ENCODE measurements at regions of chr13 and their contacts with region 1.

Region 1: GRCh38 chr13:41668130-41668757 is 210.9 kb downstream of the RGCC start:
- DNase-seq: peak; percentile 71 to 82 (median 81)
- H3K4me3 ChIP-seq: no peak overlapping the region
- H3K4me3 Mint-ChIP-seq: no peak overlapping the region
- H3K27ac ChIP-seq: no peak overlapping the region
- H3K27ac Mint-ChIP-seq: peak overlapping the region in 1 of 7 donors; percentile 47
- H3K4me1 ChIP-seq: no peaks in the 10 kb centered on the region
- H3K4me1 Mint-ChIP-seq: no peaks in the 10 kb centered on the region
- H3K27me3 ChIP-seq: no peaks in the 10 kb centered on the region
- H3K27me3 Mint-ChIP-seq: no peaks in the 10 kb centered on the region
- CTCF ChIP-seq: peak; percentile 82

Region 2: GRCh38 chr13:40886017-40886416 is 782.2 kb before region 1 on chr13:
- intact Hi-C with region 1: no loop called
- DNase-seq: no peak
- H3K4me3 ChIP-seq: no peak overlapping the region
- H3K4me3 Mint-ChIP-seq: no peak overlapping the region
- H3K27ac ChIP-seq: no peak overlapping the region
- H3K27ac Mint-ChIP-seq: no peak overlapping the region
- H3K4me1 ChIP-seq: no peaks in the 10 kb centered on the region
- H3K4me1 Mint-ChIP-seq: no peaks in the 10 kb centered on the region
- H3K27me3 ChIP-seq: no peaks in the 10 kb centered on the region
- H3K27me3 Mint-ChIP-seq: no peaks in the 10 kb centered on the region
- CTCF ChIP-seq: no peak

Region 3: DNA sequence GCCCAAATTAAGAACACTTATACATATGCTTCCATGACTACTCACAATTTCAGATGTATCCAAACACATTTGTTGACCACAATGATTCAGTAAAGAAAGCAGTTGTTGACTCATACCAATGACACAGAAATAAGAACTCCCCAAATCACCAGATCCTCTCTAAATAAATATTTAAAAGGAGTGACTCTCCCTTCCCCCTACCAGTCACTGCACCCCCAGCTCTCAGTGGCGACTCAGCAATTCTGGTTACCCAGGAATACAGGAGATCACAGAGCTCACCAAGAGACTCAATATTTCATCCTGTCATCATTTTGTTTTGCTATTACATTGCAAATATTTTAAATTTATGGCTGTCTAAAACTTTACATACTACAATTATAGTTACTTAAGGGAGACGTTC is 79.3 kb before region 1 on chr13:
- intact Hi-C with region 1: no loop called
- DNase-seq: peak; percentile 77 to 90 (median 85)
- H3K4me3 ChIP-seq: no peak overlapping the region
- H3K4me3 Mint-ChIP-seq: peak overlapping the region in 1 of 2 donors; percentile 3
- H3K27ac ChIP-seq: peak overlapping the region in 1 of 2 donors; percentile 77
- H3K27ac Mint-ChIP-seq: peak overlapping the region; percentile 66 to 94 (median 89)
- H3K4me1 ChIP-seq: peaks cover 24 to 31% of the 10 kb centered on the region in 2 donors
- H3K4me1 Mint-ChIP-seq: peaks cover 32% of the 10 kb centered on the region
- H3K27me3 ChIP-seq: no peaks in the 10 kb centered on the region
- H3K27me3 Mint-ChIP-seq: no peaks in the 10 kb centered on the region
- CTCF ChIP-seq: no peak

Region 4: GRCh38 chr13:41835871-41836270 is 167.6 kb after region 1 on chr13:
- intact Hi-C with region 1: loop called in 1 of 2 experiments (anchors 10 kb)
- DNase-seq: no peak
- H3K4me3 ChIP-seq: no peak overlapping the region
- H3K4me3 Mint-ChIP-seq: no peak overlapping the region
- H3K27ac ChIP-seq: no peak overlapping the region
- H3K27ac Mint-ChIP-seq: no peak overlapping the region
- H3K4me1 ChIP-seq: peaks cover 6 to 19% of the 10 kb centered on the region in 2 donors
- H3K4me1 Mint-ChIP-seq: peaks cover 20% of the 10 kb centered on the region
- H3K27me3 ChIP-seq: no peaks in the 10 kb centered on the region
- H3K27me3 Mint-ChIP-seq: no peaks in the 10 kb centered on the region
- CTCF ChIP-seq: no peak

Region 5: GRCh38 chr13:42022796-42023493 is 354.7 kb after region 1 on chr13:
- intact Hi-C with region 1: no loop called
- DNase-seq: no peak
- H3K4me3 ChIP-seq: no peak overlapping the region
- H3K4me3 Mint-ChIP-seq: no peak overlapping the region
- H3K27ac ChIP-seq: no peak overlapping the region
- H3K27ac Mint-ChIP-seq: no peak overlapping the region
- H3K4me1 ChIP-seq: no peaks in the 10 kb centered on the region
- H3K4me1 Mint-ChIP-seq: no peaks in the 10 kb centered on the region
- H3K27me3 ChIP-seq: no peaks in the 10 kb centered on the region
- H3K27me3 Mint-ChIP-seq: peaks cover 0 to 3% (median 2%) of the 10 kb centered on the region in 3 donors
- CTCF ChIP-seq: no peak

Region 6: GRCh38 chr13:42039946-42040729 is 371.9 kb after region 1 on chr13:
- intact Hi-C with region 1: loop called in 1 of 2 experiments (anchors 10 kb)
- DNase-seq: peak; percentile 62 to 78 (median 76)
- H3K4me3 ChIP-seq: peak overlapping the region; percentile 85 to 92 (median 86)
- H3K4me3 Mint-ChIP-seq: peak overlapping the region; percentile 90
- H3K27ac ChIP-seq: peak overlapping the region; percentile 43 to 84
- H3K27ac Mint-ChIP-seq: peak overlapping the region; percentile 46 to 86 (median 80)
- H3K4me1 ChIP-seq: peaks cover 20 to 22% of the 10 kb centered on the region in 2 donors
- H3K4me1 Mint-ChIP-seq: peaks cover 18% of the 10 kb centered on the region
- H3K27me3 ChIP-seq: peaks cover 19 to 61% of the 10 kb centered on the region in 2 donors
- H3K27me3 Mint-ChIP-seq: peaks cover 36 to 63% (median 38%) of the 10 kb centered on the region in 3 donors
- CTCF ChIP-seq: no peak

Measured in CD14-positive monocyte (primary cell).